Gastrocnemius medialis (tissue), 4 donors: ENCODE measurements at regions of chr13 and their contacts with region 1.

Region 1: GRCh38 chr13:44237276-44237767 is 136.3 kb upstream of the SERP2 start:
- DNase-seq: peak; percentile 86 to 89
- ATAC-seq: peak; percentile 87 to 90
- H3K4me3 ChIP-seq: no peak overlapping the region
- H3K27ac ChIP-seq: peak overlapping the region; percentile 91 to 94 (median 93)
- H3K4me1 ChIP-seq: peaks cover 47 to 51% of the 10 kb centered on the region in 2 donors
- H3K27me3 ChIP-seq: no peaks in the 10 kb centered on the region
- CTCF ChIP-seq: no peak
- POLR2A ChIP-seq: peak; percentile 39 to 60

Region 2: DNA sequence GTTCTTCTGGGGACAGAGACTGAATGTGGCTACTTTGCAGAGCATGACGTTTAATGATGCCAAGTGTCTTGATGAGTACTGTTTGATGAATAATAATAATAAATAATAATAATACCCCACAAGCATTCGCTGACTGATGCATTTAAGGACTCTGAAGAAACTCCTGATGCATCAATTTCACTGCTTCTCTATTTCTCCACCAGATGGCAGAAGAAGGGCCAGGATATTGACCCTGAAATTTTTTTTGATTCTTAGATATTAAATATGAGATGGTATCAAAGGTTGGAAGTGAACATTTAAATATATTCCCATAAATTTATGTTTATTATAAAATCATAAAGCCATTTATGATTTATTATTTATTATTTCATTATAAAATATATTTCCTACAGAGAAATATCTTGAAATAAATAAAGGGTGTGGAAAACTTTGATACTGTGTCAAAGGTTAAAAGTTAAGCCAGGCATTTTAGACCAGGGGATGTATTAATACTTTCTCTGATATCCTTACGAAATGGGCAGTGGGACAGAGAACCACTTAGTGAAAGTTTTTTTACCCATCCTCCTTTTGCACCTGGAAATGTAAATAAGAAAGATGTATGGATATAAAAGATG is 186.8 kb before region 1 on chr13:
- in situ Hi-C with region 1: no loop called
- intact Hi-C with region 1: no loop called
- DNase-seq: no peak
- ATAC-seq: peak; percentile 58 to 70
- H3K4me3 ChIP-seq: no peak overlapping the region
- H3K27ac ChIP-seq: no peak overlapping the region
- H3K4me1 ChIP-seq: peaks cover 0 to 4% of the 10 kb centered on the region in 2 donors
- H3K27me3 ChIP-seq: no peaks in the 10 kb centered on the region
- CTCF ChIP-seq: peak; percentile 62 to 87 (median 73)
- POLR2A ChIP-seq: no peak

Region 3: GRCh38 chr13:44155422-44156293 is 81.7 kb before region 1 on chr13:
- in situ Hi-C with region 1: no loop called
- intact Hi-C with region 1: loop called (anchors 2 kb)
- DNase-seq: peak; percentile 43 to 75
- ATAC-seq: peak in 1 of 2 donors; percentile 28
- H3K4me3 ChIP-seq: peak overlapping the region; percentile 19 to 38 (median 32)
- H3K27ac ChIP-seq: peak overlapping the region; percentile 86 to 94 (median 92)
- H3K4me1 ChIP-seq: peaks cover 71 to 80% of the 10 kb centered on the region in 2 donors
- H3K27me3 ChIP-seq: no peaks in the 10 kb centered on the region
- CTCF ChIP-seq: peak in 1 of 5 experiments; percentile 13
- POLR2A ChIP-seq: no peak

Region 4: DNA sequence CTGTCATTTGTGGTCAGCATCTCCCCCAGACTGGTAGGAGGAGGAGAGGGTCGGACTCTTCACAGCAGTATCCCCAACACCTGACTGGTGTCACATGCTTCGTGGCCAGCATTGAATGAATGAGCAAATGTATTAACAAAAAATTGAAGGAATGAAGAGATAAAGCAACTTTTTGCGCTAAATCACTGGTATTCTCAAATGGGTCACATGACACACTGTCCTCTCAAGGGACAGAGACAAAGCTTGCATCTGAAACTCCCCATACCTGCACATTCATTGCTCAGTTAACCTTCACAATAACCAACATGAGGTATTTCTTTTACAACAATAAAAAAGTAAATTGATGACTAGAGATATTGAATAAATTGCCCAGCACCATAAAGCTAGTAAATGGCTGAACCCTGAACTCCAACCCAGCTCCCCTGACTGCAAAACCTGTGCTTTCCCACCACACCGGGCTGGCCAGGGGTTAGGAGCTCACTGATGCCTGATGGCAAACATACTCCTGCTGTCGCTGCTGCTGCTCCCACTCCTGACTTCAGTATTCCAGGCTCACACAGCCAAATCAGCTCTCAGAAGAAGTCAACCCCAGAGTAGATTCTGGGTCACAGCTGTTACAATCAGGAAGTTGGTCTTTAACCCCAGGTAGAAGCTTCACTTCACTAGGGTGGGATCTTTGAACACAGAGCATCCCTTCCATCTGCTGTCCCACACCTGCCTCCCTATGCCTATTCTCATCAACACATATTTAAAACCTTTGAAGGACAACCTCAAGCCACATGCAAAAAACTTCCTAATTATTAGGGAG is 36.5 kb after region 1 on chr13:
- in situ Hi-C with region 1: no loop called
- intact Hi-C with region 1: loop called (anchors 1 kb)
- DNase-seq: no peak
- ATAC-seq: no peak
- H3K4me3 ChIP-seq: peak overlapping the region in 2 of 4 donors; percentile 13 to 14
- H3K27ac ChIP-seq: peak overlapping the region; percentile 70 to 97 (median 93)
- H3K4me1 ChIP-seq: peaks cover 44 to 63% of the 10 kb centered on the region in 2 donors
- H3K27me3 ChIP-seq: no peaks in the 10 kb centered on the region
- CTCF ChIP-seq: no peak
- POLR2A ChIP-seq: no peak

Region 5: DNA sequence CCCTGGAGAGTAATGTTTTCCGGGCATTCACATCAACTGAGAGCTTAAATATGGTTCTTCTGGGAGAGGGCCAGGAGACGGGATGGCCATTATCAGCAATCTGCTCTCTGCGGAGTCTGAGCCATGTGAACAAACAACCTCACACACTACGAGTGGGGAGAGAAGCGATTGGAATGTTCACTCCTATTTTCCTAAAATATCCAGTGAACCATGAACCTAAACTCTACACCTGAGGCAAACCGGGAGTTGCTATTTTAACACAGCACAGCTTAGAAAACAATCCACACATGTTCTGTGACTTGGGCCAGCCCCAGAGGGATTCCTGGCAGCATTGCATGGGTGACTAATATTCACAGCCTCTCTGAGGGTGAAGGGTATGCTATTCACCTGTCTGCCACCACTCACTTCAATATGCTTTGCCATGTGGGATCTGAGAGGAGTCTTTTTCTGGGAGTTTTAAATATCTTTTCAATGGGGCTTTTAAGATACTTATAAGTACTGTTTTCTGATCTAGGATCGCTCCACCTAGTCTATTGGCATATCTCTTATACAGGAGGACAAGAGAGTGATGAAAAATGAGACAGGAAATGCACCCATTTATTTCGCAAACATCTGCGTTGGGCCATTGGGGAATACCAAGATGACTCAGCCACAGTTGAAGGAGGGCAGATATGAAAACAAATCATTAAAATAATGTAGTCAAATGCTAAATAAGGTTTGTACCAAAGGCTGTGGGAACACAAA is 63.7 kb after region 1 on chr13:
- in situ Hi-C with region 1: loop called in 1 of 4 experiments (anchors 10 kb)
- intact Hi-C with region 1: loop called (anchors 1 kb)
- DNase-seq: peak; percentile 84 to 88
- ATAC-seq: peak; percentile 93 to 94
- H3K4me3 ChIP-seq: no peak overlapping the region
- H3K27ac ChIP-seq: peak overlapping the region; percentile 71 to 89 (median 86)
- H3K4me1 ChIP-seq: peaks cover 70 to 79% of the 10 kb centered on the region in 2 donors
- H3K27me3 ChIP-seq: no peaks in the 10 kb centered on the region
- CTCF ChIP-seq: peak in 1 of 5 experiments; percentile 37
- POLR2A ChIP-seq: peak in 1 of 2 donors; percentile 25

Region 6: GRCh38 chr13:44540761-44541434 is 303.6 kb after region 1 on chr13:
- in situ Hi-C with region 1: no loop called
- intact Hi-C with region 1: no loop called
- DNase-seq: no peak
- ATAC-seq: peak; percentile 75 to 82
- H3K4me3 ChIP-seq: peak overlapping the region in 2 of 4 donors; percentile 8 to 9
- H3K27ac ChIP-seq: peak overlapping the region; percentile 57 to 82 (median 68)
- H3K4me1 ChIP-seq: peaks cover 42 to 44% of the 10 kb centered on the region in 2 donors
- H3K27me3 ChIP-seq: no peaks in the 10 kb centered on the region
- CTCF ChIP-seq: no peak
- POLR2A ChIP-seq: no peak

Region 7: DNA sequence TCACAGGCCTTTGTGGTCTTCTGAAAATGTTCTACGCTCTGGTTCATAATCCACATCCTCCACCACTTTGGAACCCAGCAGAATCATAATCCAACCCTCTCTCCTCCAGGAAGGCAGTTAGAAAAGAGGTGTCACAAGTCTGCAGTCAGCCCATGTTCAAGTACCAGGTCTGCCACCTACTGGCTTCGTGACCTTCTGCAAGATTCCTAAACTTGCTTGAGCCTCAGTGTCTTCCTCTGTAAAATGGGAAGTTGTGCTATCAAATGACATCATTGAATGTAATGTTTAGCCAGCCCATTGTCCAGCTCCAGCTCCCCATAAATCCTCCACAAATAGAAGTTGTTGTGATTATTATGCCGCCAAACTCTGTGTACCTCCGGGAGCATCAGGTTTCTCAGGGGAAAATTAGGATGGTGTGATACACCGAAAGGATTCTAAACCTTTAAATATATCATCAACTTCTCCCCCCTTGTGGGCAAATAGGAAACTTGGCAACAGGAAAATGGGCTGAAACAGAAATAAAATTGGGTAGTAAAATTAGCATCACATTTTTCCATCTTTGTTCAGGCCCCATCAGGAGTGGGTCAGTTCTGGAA is 642.2 kb after region 1 on chr13:
- in situ Hi-C with region 1: no loop called
- intact Hi-C with region 1: loop called (anchors 10 kb)
- DNase-seq: no peak
- ATAC-seq: peak; percentile 57 to 59
- H3K4me3 ChIP-seq: no peak overlapping the region
- H3K27ac ChIP-seq: peak overlapping the region; percentile 14 to 73 (median 52)
- H3K4me1 ChIP-seq: peaks cover 7 to 19% of the 10 kb centered on the region in 2 donors
- H3K27me3 ChIP-seq: no peaks in the 10 kb centered on the region
- CTCF ChIP-seq: peak; percentile 22 to 65 (median 46)
- POLR2A ChIP-seq: no peak

Region 8: GRCh38 chr13:44951184-44951583 is 713.9 kb after region 1 on chr13:
- in situ Hi-C with region 1: no loop called
- intact Hi-C with region 1: no loop called
- DNase-seq: no peak
- ATAC-seq: no peak
- H3K4me3 ChIP-seq: no peak overlapping the region
- H3K27ac ChIP-seq: peak overlapping the region; percentile 56 to 66 (median 59)
- H3K4me1 ChIP-seq: peaks cover 25 to 26% of the 10 kb centered on the region in 2 donors
- H3K27me3 ChIP-seq: no peaks in the 10 kb centered on the region
- CTCF ChIP-seq: no peak
- POLR2A ChIP-seq: no peak